Esophagus muscularis mucosa (tissue), 4 donors: ENCODE measurements at regions of chr16 and their contacts with region 1.

Region 1: GRCh38 chr16:79601931-79602627 is 1.5 kb upstream of the MAF start:
- DNase-seq: peak; percentile 96
- H3K4me3 ChIP-seq: peak overlapping the region; percentile 60 to 80 (median 70)
- H3K27ac ChIP-seq: peak overlapping the region; percentile 78 to 88 (median 86)
- H3K4me1 ChIP-seq: peaks cover 0 to 43% (median 33%) of the 10 kb centered on the region in 4 donors
- H3K27me3 ChIP-seq: peaks cover 0 to 22% (median 0%) of the 10 kb centered on the region in 4 donors
- CTCF ChIP-seq: peak; percentile 67 to 73 (median 69)
- EP300 ChIP-seq: no peak
- POLR2A ChIP-seq: no peak

Region 2: DNA sequence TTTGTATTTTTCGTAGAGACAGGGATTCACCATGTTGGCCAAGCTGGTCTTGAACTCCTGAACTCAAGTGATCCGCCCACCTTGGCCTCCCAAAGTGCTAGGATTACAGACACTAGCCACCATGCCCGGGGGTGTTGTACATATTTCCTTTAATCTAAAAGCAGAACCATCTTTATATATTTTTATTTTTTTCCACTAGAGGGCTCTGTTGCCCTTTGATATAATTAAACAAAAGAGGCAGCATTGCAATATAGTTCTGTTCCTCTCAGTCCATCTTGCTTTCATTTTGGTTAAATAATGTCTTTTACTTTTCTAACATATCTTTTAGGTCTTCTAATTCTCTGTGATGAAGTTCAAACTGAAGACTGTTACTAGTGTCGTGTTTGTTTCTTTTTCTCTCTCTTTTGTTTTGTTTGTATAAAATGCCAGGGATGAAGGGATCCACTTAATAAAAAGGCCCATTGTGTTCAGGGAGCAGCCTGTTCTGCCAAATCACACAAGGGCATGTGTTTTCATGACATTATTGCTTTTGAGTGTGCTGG is 1479.2 kb before region 1 on chr16:
- intact Hi-C with region 1: loop called (anchors 5 kb)
- DNase-seq: no peak
- H3K4me3 ChIP-seq: no peak overlapping the region
- H3K27ac ChIP-seq: peak overlapping the region in 1 of 4 donors; percentile 40
- H3K4me1 ChIP-seq: peaks cover 8 to 26% (median 20%) of the 10 kb centered on the region in 4 donors
- H3K27me3 ChIP-seq: no peaks in the 10 kb centered on the region
- CTCF ChIP-seq: peak; percentile 51 to 63 (median 55)
- EP300 ChIP-seq: no peak
- POLR2A ChIP-seq: no peak

Region 3: DNA sequence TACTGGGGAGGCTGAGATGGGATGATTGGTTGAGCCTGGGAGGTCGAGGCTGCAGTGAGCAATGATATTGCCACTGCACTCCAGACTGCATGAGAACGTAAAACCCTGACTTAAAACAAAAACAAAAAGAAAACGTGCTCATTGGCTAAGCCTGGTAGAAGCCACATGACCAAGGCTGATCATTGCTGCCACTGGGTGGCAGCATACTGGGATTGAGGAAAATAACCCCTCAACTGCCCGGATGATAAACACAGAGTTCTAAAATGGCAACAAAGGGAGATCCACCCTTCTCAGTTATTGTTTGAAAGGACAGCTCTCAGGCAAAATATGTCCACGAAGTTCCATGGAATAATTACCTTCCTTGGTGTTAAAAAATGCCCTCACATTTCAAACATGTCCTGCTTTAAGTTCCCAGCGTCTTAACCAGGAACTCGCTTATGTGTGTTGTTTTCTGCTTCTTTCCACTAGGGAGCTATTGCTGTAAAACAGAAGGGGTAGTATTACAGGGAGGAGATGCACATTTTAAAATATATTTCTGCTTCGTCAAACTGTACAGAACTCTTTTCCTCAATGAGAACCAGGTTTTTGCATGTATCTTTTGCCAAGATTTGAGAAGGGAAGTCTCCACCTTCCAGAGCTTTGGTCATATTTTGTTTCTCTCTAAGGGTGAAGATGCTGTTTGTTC is 676.9 kb before region 1 on chr16:
- intact Hi-C with region 1: loop called (anchors 5 kb)
- DNase-seq: no peak
- H3K4me3 ChIP-seq: no peak overlapping the region
- H3K27ac ChIP-seq: no peak overlapping the region
- H3K4me1 ChIP-seq: peaks cover 0 to 6% (median 0%) of the 10 kb centered on the region in 4 donors
- H3K27me3 ChIP-seq: no peaks in the 10 kb centered on the region
- CTCF ChIP-seq: peak; percentile 19 to 42 (median 35)
- EP300 ChIP-seq: no peak
- POLR2A ChIP-seq: no peak

Region 4: GRCh38 chr16:79071424-79071823 is 530.7 kb before region 1 on chr16:
- intact Hi-C with region 1: loop called (anchors 10 kb)
- DNase-seq: no peak
- H3K4me3 ChIP-seq: no peak overlapping the region
- H3K27ac ChIP-seq: peak overlapping the region; percentile 72 to 82 (median 79)
- H3K4me1 ChIP-seq: peaks cover 0 to 70% (median 51%) of the 10 kb centered on the region in 4 donors
- H3K27me3 ChIP-seq: no peaks in the 10 kb centered on the region
- CTCF ChIP-seq: no peak
- EP300 ChIP-seq: no peak
- POLR2A ChIP-seq: no peak

Region 5: GRCh38 chr16:79286646-79287423 is 315.2 kb before region 1 on chr16:
- intact Hi-C with region 1: no loop called
- DNase-seq: no peak
- H3K4me3 ChIP-seq: peak overlapping the region; percentile 30 to 43 (median 34)
- H3K27ac ChIP-seq: no peak overlapping the region
- H3K4me1 ChIP-seq: peaks cover 5 to 10% (median 9%) of the 10 kb centered on the region in 4 donors
- H3K27me3 ChIP-seq: peaks cover 0 to 5% (median 0%) of the 10 kb centered on the region in 4 donors
- CTCF ChIP-seq: no peak
- EP300 ChIP-seq: no peak
- POLR2A ChIP-seq: no peak